ENCODE measurements at regions of chr6 and their contacts with region 1.

Region 1: GRCh38 chr6:39166189-39166911 is 51.4 kb upstream of the SAYSD1 start:
- DNase-seq: peak; percentile 59 to 68
- H3K4me3 ChIP-seq: no peak overlapping the region
- H3K27ac ChIP-seq: no peak overlapping the region
- H3K4me1 ChIP-seq: no peaks in the 10 kb centered on the region
- H3K27me3 ChIP-seq: no peaks in the 10 kb centered on the region
- CTCF ChIP-seq: peak; percentile 49 to 88 (median 77)
- POLR2A ChIP-seq: no peak

Region 2: DNA sequence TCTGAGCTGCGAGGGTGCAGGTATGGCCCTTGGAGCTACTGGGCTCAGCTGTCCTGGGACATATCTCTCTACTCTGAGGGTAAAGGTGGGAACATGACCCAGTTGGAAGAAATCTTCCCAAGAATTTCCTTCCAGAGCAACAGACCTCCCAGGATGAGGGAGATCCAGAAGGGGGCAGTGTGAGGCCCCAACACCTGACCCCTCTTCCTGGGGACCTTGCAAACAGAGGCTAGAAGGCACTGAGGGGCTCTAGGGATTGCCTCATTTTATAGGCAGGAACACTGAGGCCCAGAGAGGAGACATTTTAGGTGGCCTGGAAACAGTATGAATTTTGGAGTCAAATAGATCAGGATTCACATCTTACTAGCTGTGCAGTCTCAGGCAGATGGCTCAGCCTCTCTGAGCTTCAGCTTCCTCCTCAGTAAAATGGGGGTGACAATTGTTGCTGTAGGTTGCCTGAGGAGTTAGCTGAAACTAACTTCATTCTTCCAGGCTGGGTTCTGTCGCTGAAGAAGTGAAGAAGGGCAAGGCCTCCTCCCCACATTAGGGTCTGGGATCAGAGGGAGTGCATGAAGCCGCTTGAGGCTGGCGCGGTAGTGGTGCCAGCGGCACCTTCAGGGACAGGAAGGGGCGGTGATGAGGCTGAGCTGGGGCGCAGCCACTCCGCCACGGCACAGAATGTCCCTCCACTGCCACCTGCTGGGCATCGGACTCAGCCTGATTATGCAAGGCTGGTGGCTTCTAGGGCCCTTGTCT is 136.5 kb after region 1 on chr6:
- intact Hi-C with region 1: loop called (anchors 5 kb)
- DNase-seq: peak; percentile 62 to 81
- H3K4me3 ChIP-seq: peak overlapping the region in 1 of 3 donors; percentile 45
- H3K27ac ChIP-seq: no peak overlapping the region
- H3K4me1 ChIP-seq: no peaks in the 10 kb centered on the region
- H3K27me3 ChIP-seq: no peaks in the 10 kb centered on the region
- CTCF ChIP-seq: peak; percentile 47 to 91 (median 81)
- POLR2A ChIP-seq: no peak

Region 3: GRCh38 chr6:39309942-39310531 is 143.7 kb after region 1 on chr6:
- intact Hi-C with region 1: loop called (anchors 5 kb)
- DNase-seq: peak; percentile 67 to 77
- H3K4me3 ChIP-seq: no peak overlapping the region
- H3K27ac ChIP-seq: no peak overlapping the region
- H3K4me1 ChIP-seq: peaks cover 0 to 4% of the 10 kb centered on the region in 2 donors
- H3K27me3 ChIP-seq: peaks cover 0 to 44% of the 10 kb centered on the region in 2 donors
- CTCF ChIP-seq: peak; percentile 72 to 93 (median 82)
- POLR2A ChIP-seq: no peak

Region 4: DNA sequence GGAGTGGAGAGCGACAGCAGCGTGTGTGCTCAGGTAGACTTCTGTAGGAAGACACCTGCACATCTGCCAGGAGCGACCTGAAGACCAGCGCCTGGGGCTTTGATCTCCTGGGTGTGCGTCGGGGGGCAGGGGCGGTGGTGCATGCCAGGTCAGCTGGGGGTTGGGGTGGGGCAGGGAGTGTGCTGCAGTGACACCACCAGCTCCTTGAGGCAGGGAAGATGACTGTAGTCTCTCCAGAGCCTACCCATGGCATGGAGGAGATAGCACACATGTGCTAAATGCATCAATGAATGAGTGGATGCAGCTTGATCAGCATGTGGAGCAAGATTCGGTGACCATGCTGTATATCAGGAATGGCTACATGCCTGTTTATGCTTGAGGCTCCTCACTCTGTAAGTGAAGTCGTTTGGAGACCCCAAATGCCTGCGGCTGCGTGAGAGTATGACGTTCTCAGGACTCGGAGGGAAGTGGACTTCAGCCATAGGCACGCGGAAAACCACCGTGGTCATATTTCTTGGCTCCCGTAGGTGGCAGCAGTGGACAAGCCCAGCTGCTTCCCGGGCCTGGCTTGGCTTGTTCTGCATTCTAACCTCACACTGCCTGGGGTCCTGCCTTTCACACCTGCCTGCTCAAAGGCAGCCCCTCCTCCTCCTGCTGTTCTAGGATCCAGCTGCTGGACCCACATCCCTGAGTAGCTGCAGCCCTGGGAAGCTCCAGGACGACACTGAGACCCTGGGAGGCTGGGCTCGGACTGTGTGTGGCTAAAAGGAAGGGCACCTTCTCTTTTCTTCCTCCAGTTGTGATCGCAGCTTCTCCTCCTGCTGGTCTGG is 195.5 kb after region 1 on chr6:
- intact Hi-C with region 1: no loop called
- DNase-seq: peak in 1 of 2 donors; percentile 41
- H3K4me3 ChIP-seq: peak overlapping the region in 1 of 3 donors; percentile 34
- H3K27ac ChIP-seq: no peak overlapping the region
- H3K4me1 ChIP-seq: no peaks in the 10 kb centered on the region
- H3K27me3 ChIP-seq: no peaks in the 10 kb centered on the region
- CTCF ChIP-seq: peak; percentile 63 to 68 (median 66)
- POLR2A ChIP-seq: no peak

Measured in breast epithelium (tissue), 4 donors.